ENCODE measurements at regions of chr21 and their contacts with region 1.

Region 1: GRCh38 chr21:16330082-16330907 is 600.5 kb downstream of the USP25 start:
- DNase-seq: no peak
- H3K4me3 Mint-ChIP-seq: no peak overlapping the region
- H3K27ac Mint-ChIP-seq: no peak overlapping the region
- H3K4me1 Mint-ChIP-seq: no peaks in the 10 kb centered on the region
- H3K27me3 Mint-ChIP-seq: no peaks in the 10 kb centered on the region

Region 2: DNA sequence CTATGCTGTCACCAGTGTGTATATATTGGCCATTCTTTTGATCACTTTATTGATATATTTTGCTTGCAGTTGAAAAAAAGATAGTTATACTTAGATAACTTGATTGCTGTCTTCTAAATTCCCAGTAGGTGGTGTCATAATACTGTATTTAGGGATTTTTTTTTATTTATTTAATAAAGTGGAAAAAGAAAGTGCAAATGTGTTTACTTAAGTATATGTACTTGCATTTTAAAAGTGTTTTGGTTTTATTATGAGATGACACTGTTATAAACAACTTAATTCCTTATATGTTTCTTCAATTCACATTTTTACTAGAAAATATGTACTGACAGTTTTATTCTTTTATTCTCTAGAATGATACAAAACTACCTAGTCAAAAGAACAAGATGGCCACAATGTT is 435.7 kb before region 1 on chr21:
- CTCF ChIA-PET with region 1: no interaction called
- intact Hi-C with region 1: loop called (anchors 1 kb)
- DNase-seq: no peak
- H3K4me3 Mint-ChIP-seq: no peak overlapping the region
- H3K27ac Mint-ChIP-seq: no peak overlapping the region
- H3K4me1 Mint-ChIP-seq: no peaks in the 10 kb centered on the region
- H3K27me3 Mint-ChIP-seq: peaks cover 2% of the 10 kb centered on the region

Region 3: GRCh38 chr21:16002874-16003466 is 327.3 kb before region 1 on chr21:
- CTCF ChIA-PET with region 1: interaction called, 3 read pairs
- intact Hi-C with region 1: loop called (anchors 1 kb)
- DNase-seq: no peak
- H3K4me3 Mint-ChIP-seq: no peak overlapping the region
- H3K27ac Mint-ChIP-seq: no peak overlapping the region
- H3K4me1 Mint-ChIP-seq: no peaks in the 10 kb centered on the region
- H3K27me3 Mint-ChIP-seq: no peaks in the 10 kb centered on the region

Region 4: GRCh38 chr21:16082038-16082816 is 248.1 kb before region 1 on chr21:
- CTCF ChIA-PET with region 1: interaction called, 20 read pairs
- intact Hi-C with region 1: loop called (anchors 1 kb)
- DNase-seq: no peak
- H3K4me3 Mint-ChIP-seq: no peak overlapping the region
- H3K27ac Mint-ChIP-seq: no peak overlapping the region
- H3K4me1 Mint-ChIP-seq: no peaks in the 10 kb centered on the region
- H3K27me3 Mint-ChIP-seq: no peaks in the 10 kb centered on the region

Region 5: DNA sequence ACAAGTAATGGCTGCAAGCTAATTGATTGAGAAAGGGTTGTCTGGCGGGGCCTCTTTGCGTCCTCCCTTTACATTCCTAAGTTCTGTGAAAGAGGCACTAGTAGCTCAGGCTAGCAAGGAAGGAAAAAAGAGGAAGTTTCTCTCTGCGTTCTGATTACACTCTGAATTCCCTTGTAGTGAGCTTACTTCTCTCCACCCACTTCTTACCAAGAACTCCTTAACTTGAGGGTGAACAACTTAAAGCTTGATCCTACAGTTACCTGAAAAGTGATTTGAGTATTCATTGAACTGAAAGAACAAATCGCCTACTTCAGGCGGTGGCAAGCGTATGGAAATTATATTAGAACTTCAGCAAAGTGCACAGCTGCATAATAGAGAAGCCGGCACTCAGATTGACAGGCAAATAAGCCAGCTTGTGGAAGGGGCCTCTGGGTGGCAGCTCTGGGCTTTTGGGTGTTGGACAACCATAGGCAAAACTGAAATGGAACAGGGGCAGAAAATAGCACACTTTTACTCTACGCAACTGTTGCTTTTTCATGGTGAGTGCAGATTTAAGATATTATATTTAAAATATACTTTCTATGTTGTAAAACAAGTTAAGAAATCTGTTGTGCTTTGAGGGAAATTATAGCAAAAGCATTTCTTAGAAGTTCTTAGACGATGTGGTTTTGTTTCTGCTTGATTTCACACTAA is 136.1 kb before region 1 on chr21:
- CTCF ChIA-PET with region 1: interaction called, 3 read pairs
- intact Hi-C with region 1: loop called (anchors 1 kb)
- DNase-seq: peak; percentile 34
- H3K4me3 Mint-ChIP-seq: peak overlapping the region; percentile 57
- H3K27ac Mint-ChIP-seq: no peak overlapping the region
- H3K4me1 Mint-ChIP-seq: peaks cover 7% of the 10 kb centered on the region
- H3K27me3 Mint-ChIP-seq: no peaks in the 10 kb centered on the region

Region 6: DNA sequence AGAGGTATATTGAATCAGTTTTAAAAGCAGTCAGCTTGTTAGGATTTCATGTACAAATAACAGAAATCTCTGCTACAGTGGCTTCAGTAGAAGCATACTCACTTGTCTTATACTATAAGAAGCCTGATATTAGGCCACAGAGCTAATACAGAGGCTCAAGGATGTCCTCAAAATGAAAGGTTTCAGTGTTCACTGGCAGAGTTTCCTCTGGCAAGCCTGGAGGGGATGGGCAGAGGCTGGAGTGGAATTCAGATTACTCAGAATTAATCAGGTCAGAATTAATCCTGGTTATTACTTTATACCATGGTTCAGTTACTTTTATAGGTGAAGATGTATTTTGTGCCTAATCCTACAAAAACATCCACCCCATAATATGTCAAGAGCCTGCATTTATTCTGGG is 80.0 kb before region 1 on chr21:
- CTCF ChIA-PET with region 1: no interaction called
- intact Hi-C with region 1: no loop called
- DNase-seq: no peak
- H3K4me3 Mint-ChIP-seq: no peak overlapping the region
- H3K27ac Mint-ChIP-seq: no peak overlapping the region
- H3K4me1 Mint-ChIP-seq: no peaks in the 10 kb centered on the region
- H3K27me3 Mint-ChIP-seq: no peaks in the 10 kb centered on the region

Region 7: GRCh38 chr21:16294128-16294527 is 36.2 kb before region 1 on chr21:
- CTCF ChIA-PET with region 1: no interaction called
- intact Hi-C with region 1: no loop called
- DNase-seq: no peak
- H3K4me3 Mint-ChIP-seq: no peak overlapping the region
- H3K27ac Mint-ChIP-seq: no peak overlapping the region
- H3K4me1 Mint-ChIP-seq: no peaks in the 10 kb centered on the region
- H3K27me3 Mint-ChIP-seq: no peaks in the 10 kb centered on the region

Region 8: GRCh38 chr21:16308269-16308668 is 22.0 kb before region 1 on chr21:
- CTCF ChIA-PET with region 1: interaction called, 3 read pairs
- intact Hi-C with region 1: loop called (anchors 1 kb)
- DNase-seq: no peak
- H3K4me3 Mint-ChIP-seq: no peak overlapping the region
- H3K27ac Mint-ChIP-seq: no peak overlapping the region
- H3K4me1 Mint-ChIP-seq: peaks cover 10% of the 10 kb centered on the region
- H3K27me3 Mint-ChIP-seq: peaks cover 6% of the 10 kb centered on the region

Measured in activated naive CD4-positive, alpha-beta T cell treated with anti-CD3 and anti-CD28 coated beads for 36 hours (primary cell).